ENCODE measurements at regions of chr7 and their contacts with region 1.

Region 1: DNA sequence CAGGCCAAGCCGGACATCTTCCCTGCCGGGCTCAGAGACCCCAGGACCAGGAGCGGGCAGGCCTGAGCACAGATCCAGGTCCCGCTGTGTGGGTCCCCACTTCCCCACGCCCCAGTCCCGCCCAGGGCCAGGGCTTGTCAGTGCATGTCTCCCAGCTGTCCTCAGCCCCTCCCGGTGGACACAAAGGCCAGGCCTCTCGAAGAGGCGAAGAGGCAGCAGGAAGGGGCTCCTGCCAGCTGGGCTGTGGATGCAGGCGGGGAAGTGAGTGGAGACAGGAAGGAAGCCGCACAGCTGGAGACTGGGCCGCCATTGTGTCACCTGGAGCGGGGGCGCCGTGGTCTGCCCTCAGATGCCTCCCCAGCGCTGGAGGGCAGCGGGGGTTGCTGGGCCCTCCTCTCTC is 4.8 kb downstream of the GRIFIN start:
- DNase-seq: no peak
- H3K4me3 Mint-ChIP-seq: no peak overlapping the region
- H3K27ac Mint-ChIP-seq: no peak overlapping the region
- H3K4me1 Mint-ChIP-seq: peaks cover 6% of the 10 kb centered on the region
- H3K27me3 Mint-ChIP-seq: peaks cover 42% of the 10 kb centered on the region

Region 2: GRCh38 chr7:2451171-2452073 is 20.0 kb before region 1 on chr7:
- CTCF ChIA-PET with region 1: interaction called, 76 read pairs
- DNase-seq: peak; percentile 84
- H3K4me3 Mint-ChIP-seq: no peak overlapping the region
- H3K27ac Mint-ChIP-seq: no peak overlapping the region
- H3K4me1 Mint-ChIP-seq: peaks cover 8% of the 10 kb centered on the region
- H3K27me3 Mint-ChIP-seq: peaks cover 41% of the 10 kb centered on the region

Region 3: DNA sequence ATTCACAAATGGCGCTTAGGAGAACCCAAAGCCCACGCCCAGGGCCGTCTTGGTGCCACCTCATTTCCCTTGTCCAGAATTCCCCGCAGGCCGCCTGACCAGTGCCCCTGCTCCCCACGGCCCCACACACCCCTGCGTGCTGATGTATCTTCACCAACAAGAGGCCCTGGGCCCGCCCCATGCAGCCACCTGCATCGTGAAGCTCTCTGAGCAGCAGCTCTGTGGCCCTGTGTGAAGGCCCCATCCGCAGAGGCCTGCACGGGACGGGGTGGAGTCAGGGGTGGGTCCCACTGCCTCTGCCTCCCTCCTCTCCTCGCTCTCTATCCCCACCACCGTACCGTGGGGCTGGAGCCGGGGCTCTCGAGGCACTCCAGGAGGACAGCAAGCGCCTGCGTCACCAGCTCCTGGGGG is 69.2 kb after region 1 on chr7:
- CTCF ChIA-PET with region 1: no interaction called
- DNase-seq: no peak
- H3K4me3 Mint-ChIP-seq: no peak overlapping the region
- H3K27ac Mint-ChIP-seq: no peak overlapping the region
- H3K4me1 Mint-ChIP-seq: no peaks in the 10 kb centered on the region
- H3K27me3 Mint-ChIP-seq: no peaks in the 10 kb centered on the region

Region 4: GRCh38 chr7:2567679-2568278 is 96.4 kb after region 1 on chr7:
- CTCF ChIA-PET with region 1: no interaction called
- DNase-seq: no peak
- H3K4me3 Mint-ChIP-seq: no peak overlapping the region
- H3K27ac Mint-ChIP-seq: no peak overlapping the region
- H3K4me1 Mint-ChIP-seq: peaks cover 2% of the 10 kb centered on the region
- H3K27me3 Mint-ChIP-seq: no peaks in the 10 kb centered on the region

Measured in activated naive CD4-positive, alpha-beta T cell treated with anti-CD3 and anti-CD28 coated beads, Interleukin-2, amount 10 ng/mL, durations not matched to agents 7 days and 5 days (primary cell).